Activated CD4-positive, alpha-beta T cell treated with anti-CD3 and anti-CD28 coated beads, Interleukin-2, amount 10 ng/mL, durations not matched to agents 24 days and 14 days (primary cell): ENCODE measurements at regions of chr18 and their contacts with region 1.

Region 1: GRCh38 chr18:62714671-62715435 is 488 bp upstream of the PHLPP1 start:
- DNase-seq: peak; percentile 97
- H3K4me3 Mint-ChIP-seq: peak overlapping the region; percentile 87
- H3K27ac Mint-ChIP-seq: peak overlapping the region; percentile 86
- H3K4me1 Mint-ChIP-seq: peaks cover 19% of the 10 kb centered on the region
- H3K27me3 Mint-ChIP-seq: peaks cover 27% of the 10 kb centered on the region

Region 2: DNA sequence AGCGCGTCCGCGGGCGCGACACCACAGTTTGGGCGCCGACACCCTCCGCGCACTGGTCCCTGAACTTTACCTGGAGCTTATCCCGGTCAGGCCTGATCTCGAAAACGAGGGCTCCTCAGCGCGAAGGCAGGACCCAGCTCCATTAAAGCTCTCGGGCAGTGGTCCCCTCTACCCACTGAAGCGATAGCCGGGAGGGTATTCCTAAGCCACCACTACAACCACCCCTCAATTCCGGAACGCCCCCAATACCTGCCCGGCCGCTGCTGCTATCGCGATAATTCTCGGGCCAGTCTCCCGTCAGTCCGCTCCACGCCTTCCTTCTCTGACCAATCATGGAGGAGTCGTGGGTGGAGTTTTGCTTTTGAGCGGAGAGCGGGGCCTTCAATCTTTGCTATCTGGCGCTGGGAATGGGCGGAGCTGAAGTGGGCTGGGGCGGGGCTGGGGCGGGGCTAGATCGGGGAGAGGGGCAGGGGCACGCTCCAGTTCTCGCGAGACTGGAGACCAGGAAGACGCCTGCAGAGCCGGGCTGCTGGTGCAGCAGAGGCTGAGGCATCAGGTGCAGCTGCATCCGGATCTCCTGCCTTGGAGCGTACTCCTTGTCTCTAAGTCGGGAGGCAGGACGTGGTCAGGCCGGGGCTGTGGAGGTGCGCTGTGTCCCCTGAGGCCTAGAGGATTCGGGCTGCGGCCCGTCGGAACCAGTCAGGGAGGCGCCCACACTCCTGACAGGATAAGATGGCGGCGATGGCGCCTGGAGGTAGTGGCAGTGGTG is 527.9 kb before region 1 on chr18 and contains the starts of genes PIGN and RELCH:
- intact Hi-C with region 1: loop called (anchors 1 kb)
- DNase-seq: peak; percentile 98
- H3K4me3 Mint-ChIP-seq: peak within 1 kb of the TSS; percentile 100
- H3K27ac Mint-ChIP-seq: peak within 1 kb of the TSS; percentile 97
- H3K4me1 Mint-ChIP-seq: peaks cover 42% of the 10 kb centered on the region
- H3K27me3 Mint-ChIP-seq: no peaks in the 10 kb centered on the region
- total RNA-seq, gene PIGN: 32.0 and 33.9 TPM in 2 replicates
- total RNA-seq, gene RELCH: 30.6 and 31.1 TPM in 2 replicates

Region 3: DNA sequence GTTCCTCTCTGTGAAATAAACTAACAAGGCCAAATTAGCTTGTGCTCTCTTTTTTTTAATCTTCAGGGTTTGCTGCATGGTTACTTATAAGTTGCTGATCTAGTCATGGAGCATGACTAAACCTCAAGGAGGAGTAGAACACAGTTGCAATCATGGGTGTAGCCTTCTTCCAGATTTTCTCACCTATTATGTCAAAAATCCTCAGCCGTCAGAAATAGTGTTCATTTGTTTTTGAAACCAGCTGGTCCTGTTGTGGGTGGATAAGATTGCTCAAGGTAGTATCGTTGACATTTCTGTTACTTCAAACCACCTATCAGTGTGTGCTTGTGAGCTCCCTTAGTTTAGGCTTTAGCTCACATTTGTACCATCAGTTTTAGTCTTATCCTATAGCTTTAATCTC is 516.6 kb before region 1 on chr18:
- intact Hi-C with region 1: no loop called
- DNase-seq: no peak
- H3K4me3 Mint-ChIP-seq: no peak overlapping the region
- H3K27ac Mint-ChIP-seq: no peak overlapping the region
- H3K4me1 Mint-ChIP-seq: peaks cover 25% of the 10 kb centered on the region
- H3K27me3 Mint-ChIP-seq: no peaks in the 10 kb centered on the region

Region 4: DNA sequence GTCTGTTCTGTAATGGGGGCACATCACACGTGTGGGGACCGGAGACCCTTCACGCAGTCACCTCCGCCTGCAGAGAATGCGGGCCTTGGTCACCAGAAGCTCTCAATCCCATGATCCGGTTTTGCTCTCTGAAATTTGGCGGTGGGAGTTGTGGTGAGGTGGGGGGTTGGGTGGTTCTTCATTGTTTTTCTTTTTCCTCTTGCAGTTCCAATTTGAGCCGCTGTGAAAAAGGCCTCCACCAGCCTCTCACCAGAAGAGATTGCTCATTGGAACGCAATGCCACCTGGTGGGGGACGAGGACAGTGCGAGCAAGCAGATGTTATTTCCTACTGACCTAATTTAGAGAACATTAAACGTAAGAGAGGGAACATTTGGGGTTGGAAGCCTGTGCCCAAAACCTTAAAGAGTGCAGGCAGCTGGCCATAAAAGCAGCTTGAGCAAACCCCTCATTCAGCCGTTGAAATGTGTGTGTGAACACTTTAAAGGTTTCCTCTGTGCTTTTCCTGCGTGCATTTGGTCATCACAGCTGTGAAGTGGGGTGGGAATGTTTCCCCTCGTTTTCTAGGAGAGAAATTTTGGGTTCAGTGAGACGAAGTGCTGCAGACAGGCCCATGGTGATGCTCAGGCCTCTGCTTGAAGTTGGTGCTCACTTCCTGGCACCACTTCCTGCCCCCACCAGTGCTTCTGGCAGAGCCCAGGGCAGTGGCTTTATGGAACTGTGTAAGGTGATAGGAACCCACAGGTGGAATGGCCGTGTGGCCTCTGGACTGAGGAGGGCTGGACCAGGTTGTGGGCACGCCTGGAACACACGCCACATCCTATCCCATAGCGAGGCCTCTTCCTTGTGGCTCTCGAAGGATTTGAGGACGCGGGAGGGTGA is 130.4 kb before region 1 on chr18:
- intact Hi-C with region 1: loop called (anchors 1 kb)
- DNase-seq: peak; percentile 94
- H3K4me3 Mint-ChIP-seq: peak overlapping the region; percentile 59
- H3K27ac Mint-ChIP-seq: peak overlapping the region; percentile 82
- H3K4me1 Mint-ChIP-seq: peaks cover 40% of the 10 kb centered on the region
- H3K27me3 Mint-ChIP-seq: no peaks in the 10 kb centered on the region

Region 5: GRCh38 chr18:62784966-62785413 is 70.1 kb after region 1 on chr18:
- intact Hi-C with region 1: loop called (anchors 1 kb)
- DNase-seq: no peak
- H3K4me3 Mint-ChIP-seq: peak overlapping the region; percentile 1
- H3K27ac Mint-ChIP-seq: peak overlapping the region; percentile 53
- H3K4me1 Mint-ChIP-seq: peaks cover 38% of the 10 kb centered on the region
- H3K27me3 Mint-ChIP-seq: peaks cover 3% of the 10 kb centered on the region

Region 6: DNA sequence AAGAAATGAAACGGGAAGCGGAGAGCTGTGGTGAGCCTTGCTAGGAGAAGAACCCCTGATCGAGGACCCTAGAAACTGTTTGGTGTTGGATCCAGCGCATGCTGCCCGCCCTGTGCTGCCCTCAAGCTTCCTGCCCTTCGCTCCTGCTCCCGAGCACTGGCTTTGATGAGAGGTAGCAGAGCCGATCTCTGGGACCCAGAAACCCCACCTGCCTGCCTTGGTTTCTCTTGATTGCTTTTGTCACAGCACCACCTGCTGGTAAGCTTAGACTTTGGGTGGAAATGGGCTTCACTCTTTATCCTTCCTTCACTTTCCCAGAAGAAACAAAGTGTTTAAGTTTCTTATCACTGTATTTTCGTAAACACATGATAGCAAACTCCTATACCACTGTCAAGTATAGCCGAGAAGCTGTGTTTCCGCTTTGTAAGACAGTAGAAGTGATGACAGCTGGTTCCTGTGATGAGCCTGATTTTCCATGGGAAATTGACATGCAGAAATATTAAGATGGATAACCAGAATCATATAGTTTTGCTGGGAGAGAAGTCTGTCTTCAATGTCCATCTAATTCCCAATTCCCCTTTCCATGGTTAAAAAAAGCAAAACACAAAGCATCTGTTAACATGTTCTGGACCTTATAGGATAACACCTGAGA is 267.9 kb after region 1 on chr18:
- intact Hi-C with region 1: loop called (anchors 1 kb)
- DNase-seq: peak; percentile 88
- H3K4me3 Mint-ChIP-seq: no peak overlapping the region
- H3K27ac Mint-ChIP-seq: no peak overlapping the region
- H3K4me1 Mint-ChIP-seq: peaks cover 6% of the 10 kb centered on the region
- H3K27me3 Mint-ChIP-seq: no peaks in the 10 kb centered on the region

Region 7: GRCh38 chr18:63422087-63422809 is 707.4 kb after region 1 on chr18 and contains the start of gene VPS4B:
- intact Hi-C with region 1: loop called (anchors 5 kb)
- DNase-seq: peak; percentile 100
- H3K4me3 Mint-ChIP-seq: peak within 1 kb of the TSS; percentile 98
- H3K27ac Mint-ChIP-seq: peak within 1 kb of the TSS; percentile 92
- H3K4me1 Mint-ChIP-seq: peaks cover 29% of the 10 kb centered on the region
- H3K27me3 Mint-ChIP-seq: peaks cover 2% of the 10 kb centered on the region
- total RNA-seq, gene VPS4B: 50.8 and 62.1 TPM in 2 replicates